IMR-90 (cell line): ENCODE measurements at regions of chr11 and their contacts with region 1.

Region 1: GRCh38 chr11:130448416-130449309 is at the start of gene ADAMTS15:
- DNase-seq: peak; percentile 84
- ATAC-seq: peak; percentile 91
- H3K4me3 ChIP-seq: peak within 1 kb of the TSS; percentile 81
- H3K27ac ChIP-seq: peak within 1 kb of the TSS; percentile 57
- H3K4me1 ChIP-seq: peaks cover 9% of the 10 kb centered on the region
- H3K27me3 ChIP-seq: 0 out of 2 replicates have a peak, but pooled peaks cover 2% of the 10 kb centered on the region
- CTCF ChIP-seq: no peak
- POLR2A ChIP-seq: no peak
- RAD21 ChIP-seq: no peak
- total RNA-seq, gene ADAMTS15: 3.0 and 3.1 TPM in 2 replicates

Region 2: GRCh38 chr11:130601141-130601540 is 152.5 kb after region 1 on chr11:
- CTCF ChIA-PET with region 1: no interaction called
- POLR2A ChIA-PET with region 1: no interaction called
- dilution Hi-C with region 1: no loop called
- in situ Hi-C with region 1: no loop called
- intact Hi-C with region 1: loop called (anchors 2 kb)
- DNase-seq: peak; percentile 90
- ATAC-seq: peak; percentile 98
- H3K4me3 ChIP-seq: no peak overlapping the region
- H3K27ac ChIP-seq: peak overlapping the region; percentile 83
- H3K4me1 ChIP-seq: peaks cover 13% of the 10 kb centered on the region
- H3K27me3 ChIP-seq: no peaks in the 10 kb centered on the region
- CTCF ChIP-seq: no peak
- POLR2A ChIP-seq: no peak
- RAD21 ChIP-seq: peak; percentile 6; the same call in 1 of the 2 replicates

Region 3: DNA sequence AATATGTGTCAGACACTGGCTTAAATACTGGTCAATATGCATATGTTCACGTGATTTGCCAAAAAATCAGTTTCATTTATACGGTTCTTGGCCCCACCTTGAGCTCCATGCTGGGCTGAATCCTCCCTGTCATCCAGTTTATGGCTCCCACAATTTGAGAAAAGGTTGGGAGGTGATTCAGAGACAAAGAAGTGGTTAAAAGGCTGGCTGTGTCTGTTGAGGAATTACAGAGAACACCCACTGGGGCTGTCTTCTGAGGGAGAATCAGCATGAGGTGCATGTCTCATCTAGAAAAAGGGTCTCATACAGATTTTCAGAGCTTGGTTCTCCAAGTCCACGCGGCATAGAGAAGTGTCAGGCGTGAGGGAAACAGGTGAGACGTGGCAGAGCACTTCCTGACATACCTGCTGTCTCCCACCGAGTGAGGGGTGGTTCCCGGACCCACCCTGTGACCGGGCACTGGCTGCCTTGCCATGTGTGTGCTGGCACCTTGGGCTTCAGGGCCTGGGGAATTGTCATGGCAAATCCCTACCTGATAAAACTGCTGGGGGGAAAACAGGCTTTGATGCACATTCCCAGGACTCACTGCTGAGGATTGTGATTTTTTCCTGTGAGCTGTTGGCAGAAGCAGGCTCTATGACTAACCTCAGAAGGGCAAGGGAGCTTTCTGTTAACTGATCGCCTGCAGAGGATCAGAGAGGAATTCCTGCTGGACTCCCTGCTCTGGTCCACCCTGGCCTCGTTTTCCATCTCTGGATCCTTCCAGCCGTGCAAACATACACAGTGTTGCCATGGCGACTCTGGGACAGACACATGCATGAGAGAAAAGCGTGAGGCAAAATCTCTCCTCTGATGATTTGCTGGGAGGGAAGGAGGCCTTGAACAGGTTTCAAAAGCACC is 223.4 kb after region 1 on chr11:
- CTCF ChIA-PET with region 1: no interaction called
- POLR2A ChIA-PET with region 1: no interaction called
- dilution Hi-C with region 1: no loop called
- in situ Hi-C with region 1: no loop called
- intact Hi-C with region 1: loop called (anchors 2 kb)
- DNase-seq: peak; percentile 94
- ATAC-seq: peak; percentile 89
- H3K4me3 ChIP-seq: no peak overlapping the region
- H3K27ac ChIP-seq: peak overlapping the region; percentile 41; the same call in 1 of the 2 replicates
- H3K4me1 ChIP-seq: peaks cover 20% of the 10 kb centered on the region
- H3K27me3 ChIP-seq: no peaks in the 10 kb centered on the region
- CTCF ChIP-seq: no peak
- POLR2A ChIP-seq: no peak
- RAD21 ChIP-seq: peak; percentile 40

Region 4: GRCh38 chr11:130827451-130828377 is 379.1 kb after region 1 on chr11:
- CTCF ChIA-PET with region 1: no interaction called
- POLR2A ChIA-PET with region 1: no interaction called
- dilution Hi-C with region 1: no loop called
- in situ Hi-C with region 1: loop called (anchors 10 kb)
- intact Hi-C with region 1: loop called (anchors 1 kb)
- DNase-seq: peak; percentile 82
- ATAC-seq: peak; percentile 97
- H3K4me3 ChIP-seq: no peak overlapping the region
- H3K27ac ChIP-seq: peak overlapping the region; percentile 77
- H3K4me1 ChIP-seq: peaks cover 14% of the 10 kb centered on the region
- H3K27me3 ChIP-seq: peaks cover 6% of the 10 kb centered on the region
- CTCF ChIP-seq: peak; percentile 73
- POLR2A ChIP-seq: no peak
- RAD21 ChIP-seq: peak; percentile 91

Region 5: GRCh38 chr11:130861902-130862860 is 413.5 kb after region 1 on chr11:
- CTCF ChIA-PET with region 1: interaction called, 6 read pairs
- POLR2A ChIA-PET with region 1: no interaction called
- dilution Hi-C with region 1: loop called (anchors 25 kb)
- in situ Hi-C with region 1: no loop called
- intact Hi-C with region 1: loop called (anchors 1 kb)
- DNase-seq: peak; percentile 93
- ATAC-seq: peak; percentile 87
- H3K4me3 ChIP-seq: no peak overlapping the region
- H3K27ac ChIP-seq: no peak overlapping the region
- H3K4me1 ChIP-seq: peaks cover 4% of the 10 kb centered on the region; the same call in 1 of the 2 replicates
- H3K27me3 ChIP-seq: no peaks in the 10 kb centered on the region
- CTCF ChIP-seq: peak; percentile 100; the same call in 1 of the 2 replicates
- POLR2A ChIP-seq: peak; percentile 71
- RAD21 ChIP-seq: peak; percentile 100